Right ventricle myocardium superior (tissue), 1 donor: ENCODE measurements at regions of chr7 and their contacts with region 1.

Region 1: GRCh38 chr7:55019691-55020465 is 1.1 kb downstream of the EGFR start:
- DNase-seq: peak; percentile 51
- ATAC-seq: peak; percentile 30

Region 2: DNA sequence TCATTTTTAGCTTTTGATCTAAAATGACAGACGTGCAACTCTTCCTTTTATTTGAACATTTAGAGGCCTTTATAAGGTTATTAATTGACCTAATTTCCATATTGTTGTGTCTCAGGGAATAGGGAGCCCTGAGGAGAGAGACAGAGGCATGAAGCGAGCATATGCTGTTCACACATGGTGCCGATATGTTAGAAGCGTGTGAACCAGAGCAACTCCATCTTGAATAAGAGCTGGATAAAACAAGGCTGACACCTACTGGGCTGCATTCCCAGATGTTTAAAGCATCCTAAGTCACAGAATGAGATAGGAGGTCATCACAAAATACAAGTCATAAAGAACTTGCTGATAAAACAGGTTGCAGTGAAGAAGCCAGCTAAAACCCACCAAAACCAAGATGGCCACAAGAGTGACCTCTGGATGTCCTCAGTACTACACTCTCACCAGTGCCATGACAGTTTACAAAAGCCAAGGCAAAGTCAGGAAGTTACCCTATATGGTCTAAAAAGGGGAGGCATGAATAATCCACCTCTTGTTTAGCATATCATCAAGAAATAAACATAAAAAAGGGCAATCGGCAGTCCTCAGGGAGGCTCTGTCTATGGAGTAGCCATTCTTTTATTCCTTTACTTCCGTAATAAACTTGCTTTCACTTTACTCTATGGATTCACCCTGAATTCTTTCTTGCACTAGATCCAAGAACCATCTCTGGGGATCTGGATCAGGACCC is 341.0 kb before region 1 on chr7:
- intact Hi-C with region 1: no loop called
- DNase-seq: no peak
- ATAC-seq: no peak

Region 3: GRCh38 chr7:54985405-54986330 is 34.2 kb before region 1 on chr7:
- intact Hi-C with region 1: no loop called
- DNase-seq: no peak
- ATAC-seq: no peak

Region 4: GRCh38 chr7:55132890-55133551 is 113.1 kb after region 1 on chr7:
- intact Hi-C with region 1: loop called (anchors 10 kb)
- DNase-seq: no peak
- ATAC-seq: no peak